ENCODE measurements at regions of chr4 and their contacts with region 1.

Region 1: DNA sequence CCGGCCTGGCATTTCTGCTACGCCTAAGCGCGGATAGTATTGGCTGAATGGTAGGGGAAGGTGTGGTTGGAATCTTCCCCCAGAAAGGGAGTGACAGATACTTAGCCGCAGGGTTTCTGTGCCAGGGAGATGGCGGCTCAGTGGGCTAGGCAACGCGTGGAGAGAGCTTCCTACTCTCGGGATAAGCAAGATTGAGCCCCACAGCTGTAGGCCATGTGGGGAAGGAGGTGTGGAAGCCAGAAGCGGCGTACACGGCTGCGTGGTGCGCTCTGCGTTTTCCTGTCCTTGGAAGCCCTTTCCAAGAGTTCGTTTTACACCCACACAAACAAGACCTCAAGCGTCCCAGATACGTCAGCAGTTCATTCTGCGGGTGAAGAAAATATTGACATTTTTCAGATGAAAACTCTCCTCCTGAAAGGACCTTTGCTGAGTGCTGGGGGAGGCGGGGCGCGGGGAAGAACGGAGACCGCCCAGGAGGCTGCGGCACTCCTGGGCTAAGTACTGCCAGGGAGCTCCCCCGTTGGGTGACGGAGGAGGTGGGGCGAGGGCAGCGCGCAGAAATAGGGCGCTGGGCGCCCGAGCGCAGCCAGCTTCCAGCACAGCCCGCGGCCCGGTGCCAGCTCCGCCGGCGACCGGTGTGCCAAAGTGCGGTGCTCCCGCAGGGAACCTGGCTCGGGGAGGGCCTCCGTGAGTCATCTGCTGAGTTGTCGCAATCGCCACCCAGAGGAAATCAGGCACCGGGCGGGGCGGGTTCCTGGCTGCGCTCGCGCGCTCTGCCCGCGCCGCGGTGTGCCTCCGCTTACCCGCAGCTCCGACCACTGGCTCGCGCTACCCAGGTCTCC is at the start of gene GPAT3:
- DNase-seq: peak; percentile 93
- H3K4me3 ChIP-seq: peak within 1 kb of the TSS; percentile 66 to 81 (median 74)
- H3K27ac ChIP-seq: peak within 1 kb of the TSS; percentile 68 to 81 (median 76)
- H3K4me1 ChIP-seq: peaks cover 8 to 21% (median 17%) of the 10 kb centered on the region in 4 donors
- H3K27me3 ChIP-seq: no peaks in the 10 kb centered on the region
- CTCF ChIP-seq: no peak
- EP300 ChIP-seq: no peak
- POLR2A ChIP-seq: no peak
- total RNA-seq, gene GPAT3: 3.7 to 7.5 (median 5.4) TPM

Region 2: GRCh38 chr4:83490876-83491450 is 44.8 kb before region 1 on chr4:
- intact Hi-C with region 1: loop called (anchors 5 kb)
- DNase-seq: no peak
- H3K4me3 ChIP-seq: no peak overlapping the region
- H3K27ac ChIP-seq: no peak overlapping the region
- H3K4me1 ChIP-seq: peaks cover 0 to under 1% (median under 1%) of the 10 kb centered on the region in 4 donors
- H3K27me3 ChIP-seq: no peaks in the 10 kb centered on the region
- CTCF ChIP-seq: peak; percentile 46 to 68 (median 56)
- EP300 ChIP-seq: no peak
- POLR2A ChIP-seq: no peak

Region 3: GRCh38 chr4:83618431-83618830 is 82.7 kb after region 1 on chr4:
- intact Hi-C with region 1: loop called (anchors 5 kb)
- DNase-seq: no peak
- H3K4me3 ChIP-seq: no peak overlapping the region
- H3K27ac ChIP-seq: peak overlapping the region; percentile 50 to 73 (median 62)
- H3K4me1 ChIP-seq: peaks cover 18 to 30% (median 23%) of the 10 kb centered on the region in 4 donors
- H3K27me3 ChIP-seq: no peaks in the 10 kb centered on the region
- CTCF ChIP-seq: no peak
- EP300 ChIP-seq: no peak
- POLR2A ChIP-seq: no peak

Region 4: GRCh38 chr4:84220990-84221389 is 685.2 kb after region 1 on chr4:
- intact Hi-C with region 1: no loop called
- DNase-seq: no peak
- H3K4me3 ChIP-seq: peak overlapping the region in 3 of 4 donors; percentile 23 to 40 (median 26)
- H3K27ac ChIP-seq: peak overlapping the region; percentile 46 to 70 (median 52)
- H3K4me1 ChIP-seq: peaks cover 0 to 51% (median 34%) of the 10 kb centered on the region in 4 donors
- H3K27me3 ChIP-seq: no peaks in the 10 kb centered on the region
- CTCF ChIP-seq: no peak
- EP300 ChIP-seq: no peak
- POLR2A ChIP-seq: no peak